ENCODE measurements at regions of chr1 and their contacts with region 1.

Region 1: DNA sequence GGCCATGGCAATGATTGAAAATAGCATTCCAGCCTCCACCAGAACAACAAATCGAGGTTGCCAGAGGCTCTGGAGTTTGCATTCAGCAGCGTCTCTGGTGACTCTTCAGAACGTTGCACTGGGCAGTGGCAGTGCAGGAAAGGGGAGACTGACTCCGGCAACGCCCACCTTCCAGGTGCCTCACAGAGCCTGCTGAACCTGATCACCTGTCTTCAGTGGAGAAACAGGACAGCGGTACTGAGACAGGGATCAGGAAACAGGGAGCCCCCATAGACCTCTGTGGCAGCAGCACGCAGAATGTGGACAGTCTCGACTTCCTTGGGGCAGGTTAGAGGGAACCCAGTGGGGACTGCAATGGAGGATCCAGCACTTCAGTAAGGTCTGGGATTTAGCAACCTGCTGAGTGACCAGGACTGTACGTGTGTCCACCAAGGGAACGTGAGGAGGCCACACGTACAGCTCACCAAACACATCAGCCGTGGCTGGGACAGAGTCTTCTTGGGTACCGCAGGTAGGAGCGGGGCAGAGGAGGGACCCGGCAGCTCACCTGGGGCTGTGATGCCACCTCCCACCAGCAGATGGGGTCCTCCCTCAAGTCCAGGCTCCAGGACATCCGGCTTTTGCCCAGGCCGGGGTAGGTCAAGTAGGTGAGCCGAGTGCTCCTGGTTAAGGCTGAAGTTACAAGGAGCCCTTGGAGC is 128.6 kb downstream of the PRDM2 start:
- DNase-seq: peak; percentile 77
- CTCF ChIP-seq: peak; percentile 37

Region 2: DNA sequence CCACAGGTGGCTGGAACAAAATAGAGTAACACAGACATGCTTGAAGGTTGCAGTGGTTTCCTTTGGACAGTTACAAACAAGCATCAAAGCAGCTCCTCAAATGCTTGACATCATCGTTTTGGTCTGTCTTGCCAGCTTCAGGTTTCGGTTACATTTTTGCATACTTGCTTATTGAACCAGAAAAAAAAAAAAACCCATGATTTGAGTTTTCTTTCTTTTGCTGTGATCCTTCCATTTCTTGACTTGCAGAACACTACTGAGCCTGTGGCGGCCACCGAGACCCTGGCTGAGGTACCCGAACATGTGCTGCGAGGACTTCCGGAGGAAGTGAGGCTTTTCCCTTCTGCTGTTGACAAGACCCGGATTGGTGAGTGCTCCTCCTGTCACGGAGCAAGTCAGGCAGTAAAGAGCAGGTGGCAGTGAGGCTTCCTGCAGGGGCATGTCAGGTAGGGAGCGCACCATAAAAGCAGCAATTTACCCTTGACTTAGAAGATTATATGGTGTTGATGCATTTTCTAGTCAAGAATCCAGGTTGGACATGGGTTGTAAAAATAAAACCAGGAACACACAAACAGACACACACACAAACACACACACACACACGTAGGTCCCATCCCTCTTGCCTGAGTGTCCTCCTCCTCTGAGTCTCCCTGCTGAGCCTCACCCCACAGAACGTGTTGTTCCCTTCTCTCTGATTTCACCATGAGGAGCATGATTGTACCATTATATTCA is 97.7 kb before region 1 on chr1:
- in situ Hi-C with region 1: no loop called
- DNase-seq: peak; percentile 76
- CTCF ChIP-seq: no peak

Region 3: DNA sequence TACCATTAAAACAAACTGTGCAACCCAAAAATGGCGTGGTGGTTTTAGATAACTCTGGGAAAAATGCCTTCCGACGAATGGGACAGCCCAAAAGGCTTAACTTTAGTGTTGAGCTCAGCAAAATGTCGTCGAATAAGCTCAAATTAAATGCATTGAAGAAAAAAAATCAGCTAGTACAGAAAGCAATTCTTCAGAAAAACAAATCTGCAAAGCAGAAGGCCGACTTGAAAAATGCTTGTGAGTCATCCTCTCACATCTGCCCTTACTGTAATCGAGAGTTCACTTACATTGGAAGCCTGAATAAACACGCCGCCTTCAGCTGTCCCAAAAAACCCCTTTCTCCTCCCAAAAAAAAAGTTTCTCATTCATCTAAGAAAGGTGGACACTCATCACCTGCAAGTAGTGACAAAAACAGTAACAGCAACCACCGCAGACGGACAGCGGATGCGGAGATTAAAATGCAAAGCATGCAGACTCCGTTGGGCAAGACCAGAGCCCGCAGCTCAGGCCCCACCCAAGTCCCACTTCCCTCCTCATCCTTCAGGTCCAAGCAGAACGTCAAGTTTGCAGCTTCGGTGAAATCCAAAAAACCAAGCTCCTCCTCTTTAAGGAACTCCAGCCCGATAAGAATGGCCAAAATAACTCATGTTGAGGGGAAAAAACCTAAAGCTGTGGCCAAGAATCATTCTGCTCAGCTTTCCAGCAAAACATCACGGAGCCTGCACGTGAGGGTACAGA is 46.5 kb before region 1 on chr1:
- in situ Hi-C with region 1: no loop called
- DNase-seq: no peak
- CTCF ChIP-seq: no peak

Region 4: DNA sequence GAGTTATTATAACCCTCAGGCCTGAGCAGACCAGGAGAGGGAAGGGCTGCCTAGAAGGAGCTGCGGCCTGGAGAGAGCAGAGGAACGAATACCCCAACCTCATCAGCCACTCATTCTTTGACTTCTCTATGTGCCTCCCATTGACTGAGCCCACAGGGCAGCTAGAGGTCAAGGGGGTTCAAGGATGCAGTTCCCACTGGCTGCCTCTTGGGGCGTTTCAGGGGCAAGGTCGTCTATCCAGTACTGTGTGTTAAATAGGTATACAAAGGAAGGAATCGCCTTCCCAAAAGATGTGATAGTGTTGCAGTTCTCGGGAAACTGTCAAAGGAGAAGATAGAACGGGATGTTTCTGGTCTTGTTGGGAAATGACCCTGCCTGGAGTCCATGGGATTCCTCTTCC is 122.0 kb after region 1 on chr1:
- in situ Hi-C with region 1: loop called (anchors 10 kb)
- DNase-seq: no peak
- CTCF ChIP-seq: no peak